ENCODE measurements at regions of chr1 and their contacts with region 1.

Region 1: DNA sequence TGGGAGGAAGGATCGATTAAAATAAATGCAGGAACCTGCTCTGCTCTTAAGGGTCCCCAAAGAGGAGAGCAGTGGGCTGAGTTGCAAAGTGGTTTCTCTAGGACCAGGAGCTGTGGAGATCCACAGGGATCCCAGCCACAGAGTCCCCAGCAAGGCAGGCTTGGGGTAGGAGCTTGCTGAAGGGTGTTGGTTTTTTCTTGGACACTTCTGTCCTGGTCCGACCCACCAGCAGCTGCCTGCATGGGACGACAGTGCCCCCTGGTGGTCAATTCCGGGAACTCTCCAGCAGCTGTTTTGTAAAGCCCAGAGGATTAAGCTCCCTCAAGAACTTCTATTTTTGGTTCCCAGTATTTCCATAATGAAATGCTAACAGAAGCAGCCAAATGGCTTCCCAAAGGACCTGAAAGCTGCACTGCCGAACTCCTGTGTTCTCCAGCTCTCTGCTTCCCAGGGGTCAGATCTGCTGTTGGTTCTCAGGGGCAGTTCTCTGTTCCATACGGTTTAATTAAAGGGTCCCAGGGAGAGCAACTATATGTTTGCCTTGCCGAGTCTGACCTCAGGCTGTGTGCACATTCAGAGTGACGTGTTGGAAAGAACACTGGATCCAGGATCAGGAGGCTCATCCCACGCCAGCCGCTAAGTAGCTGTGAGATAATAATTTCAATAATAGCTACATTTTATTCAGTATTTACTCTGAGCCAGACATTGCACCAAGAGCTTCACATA is 23.2 kb downstream of the NENF start:
- DNase-seq: peak; percentile 87
- ATAC-seq: peak; percentile 79
- H3K4me3 Mint-ChIP-seq: no peak overlapping the region
- H3K27ac Mint-ChIP-seq: no peak overlapping the region
- H3K4me1 Mint-ChIP-seq: peaks cover 7% of the 10 kb centered on the region
- H3K27me3 Mint-ChIP-seq: no peaks in the 10 kb centered on the region

Region 2: DNA sequence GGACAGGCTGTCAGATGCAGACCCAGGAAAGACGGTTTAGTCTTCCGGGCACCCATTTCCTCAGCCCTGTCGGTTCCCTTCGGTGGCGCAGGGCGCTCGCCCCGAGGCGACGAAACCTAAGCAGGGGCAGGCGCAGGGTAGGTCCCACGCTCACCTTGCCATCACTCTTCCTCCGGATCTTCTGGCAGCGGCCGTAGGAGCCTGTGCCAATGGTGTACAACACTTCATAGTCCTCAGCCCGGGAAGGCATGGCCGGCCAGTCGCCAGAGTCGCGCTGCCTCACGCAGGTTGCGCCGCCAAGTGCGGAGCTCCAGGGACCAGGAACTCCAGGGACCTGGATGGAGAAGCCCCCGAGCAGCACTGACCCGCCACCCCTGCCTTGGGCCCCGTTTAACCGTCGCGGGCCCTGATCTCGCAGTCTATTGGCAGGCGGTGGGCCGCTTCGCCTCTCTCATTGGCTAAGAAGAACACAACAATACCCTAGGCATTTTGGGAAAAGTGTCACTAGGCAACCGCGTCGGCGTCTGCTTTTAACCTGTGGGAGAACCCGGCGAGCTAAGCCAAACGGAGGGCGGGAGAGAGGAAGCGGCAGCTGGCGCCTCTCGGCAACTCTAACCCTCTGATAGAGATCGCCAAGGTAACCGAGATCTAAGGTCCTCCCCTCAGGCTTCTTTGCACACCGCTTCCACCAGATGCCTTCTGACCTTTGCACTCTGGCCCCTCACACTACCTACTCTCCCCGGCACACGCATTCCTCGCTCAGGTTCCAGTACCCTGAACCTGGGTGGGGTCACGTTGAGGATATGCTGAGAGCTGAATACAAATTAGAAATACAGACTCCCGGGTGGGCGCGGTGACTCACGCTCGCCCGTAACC is 780.5 kb before region 1 on chr1 and contains the start of gene NEK2:
- CTCF ChIA-PET with region 1: interaction called, 61 read pairs
- DNase-seq: peak; percentile 96
- ATAC-seq: peak; percentile 96
- H3K4me3 Mint-ChIP-seq: peak within 1 kb of the TSS; percentile 97
- H3K27ac Mint-ChIP-seq: peak within 1 kb of the TSS; percentile 87
- H3K4me1 Mint-ChIP-seq: peaks cover 25% of the 10 kb centered on the region
- H3K27me3 Mint-ChIP-seq: peaks cover 3% of the 10 kb centered on the region
- total RNA-seq, gene NEK2: 42.5 to 48.4 TPM

Region 3: DNA sequence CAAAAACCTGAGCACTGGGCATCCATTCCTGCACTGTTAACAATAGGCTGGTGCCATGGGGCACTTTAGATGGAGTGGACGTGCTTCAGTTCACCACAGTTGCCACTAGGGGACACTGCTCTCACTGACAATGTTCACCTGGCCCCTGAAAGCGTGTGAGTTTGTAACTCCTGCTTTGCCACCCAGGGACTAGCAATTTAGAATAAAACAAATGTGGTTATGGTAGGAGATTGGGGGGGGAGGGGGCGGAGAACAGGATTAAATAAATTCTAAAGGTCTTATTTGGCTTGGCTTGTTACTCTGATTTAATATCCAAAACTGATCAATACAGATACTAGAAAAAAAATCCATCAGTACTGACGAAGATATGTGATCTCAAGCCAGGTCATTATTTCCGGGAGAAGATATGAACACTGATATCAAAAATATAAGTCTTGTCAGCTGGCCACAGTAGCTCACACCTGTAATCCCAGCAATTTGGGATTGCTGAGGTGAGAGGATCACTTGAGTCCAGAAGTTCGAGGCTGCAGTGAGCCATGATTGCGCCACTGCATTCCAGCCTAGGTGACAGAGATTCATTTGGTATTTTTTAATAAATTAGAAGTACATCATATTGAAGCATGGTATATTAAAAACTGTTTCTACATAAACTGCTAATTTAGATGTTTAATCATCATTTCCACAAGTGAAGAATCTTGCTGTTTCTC is 443.8 kb before region 1 on chr1:
- CTCF ChIA-PET with region 1: interaction called, 11 read pairs
- DNase-seq: peak; percentile 81
- ATAC-seq: peak; percentile 98
- H3K4me3 Mint-ChIP-seq: no peak overlapping the region
- H3K27ac Mint-ChIP-seq: no peak overlapping the region
- H3K4me1 Mint-ChIP-seq: peaks cover 2% of the 10 kb centered on the region
- H3K27me3 Mint-ChIP-seq: no peaks in the 10 kb centered on the region

Region 4: GRCh38 chr1:212070720-212071302 is 385.2 kb before region 1 on chr1:
- CTCF ChIA-PET with region 1: interaction called, 71 read pairs
- DNase-seq: no peak
- ATAC-seq: peak; percentile 47
- H3K4me3 Mint-ChIP-seq: no peak overlapping the region
- H3K27ac Mint-ChIP-seq: no peak overlapping the region
- H3K4me1 Mint-ChIP-seq: peaks cover 3% of the 10 kb centered on the region
- H3K27me3 Mint-ChIP-seq: no peaks in the 10 kb centered on the region

Region 5: GRCh38 chr1:212196355-212196754 is 259.6 kb before region 1 on chr1:
- CTCF ChIA-PET with region 1: no interaction called
- DNase-seq: no peak
- ATAC-seq: no peak
- H3K4me3 Mint-ChIP-seq: no peak overlapping the region
- H3K27ac Mint-ChIP-seq: no peak overlapping the region
- H3K4me1 Mint-ChIP-seq: no peaks in the 10 kb centered on the region
- H3K27me3 Mint-ChIP-seq: no peaks in the 10 kb centered on the region

Region 6: GRCh38 chr1:212375986-212376385 is 80.0 kb before region 1 on chr1:
- CTCF ChIA-PET with region 1: interaction called, 14 read pairs
- DNase-seq: no peak
- ATAC-seq: no peak
- H3K4me3 Mint-ChIP-seq: no peak overlapping the region
- H3K27ac Mint-ChIP-seq: no peak overlapping the region
- H3K4me1 Mint-ChIP-seq: peaks cover 8% of the 10 kb centered on the region
- H3K27me3 Mint-ChIP-seq: no peaks in the 10 kb centered on the region

Region 7: DNA sequence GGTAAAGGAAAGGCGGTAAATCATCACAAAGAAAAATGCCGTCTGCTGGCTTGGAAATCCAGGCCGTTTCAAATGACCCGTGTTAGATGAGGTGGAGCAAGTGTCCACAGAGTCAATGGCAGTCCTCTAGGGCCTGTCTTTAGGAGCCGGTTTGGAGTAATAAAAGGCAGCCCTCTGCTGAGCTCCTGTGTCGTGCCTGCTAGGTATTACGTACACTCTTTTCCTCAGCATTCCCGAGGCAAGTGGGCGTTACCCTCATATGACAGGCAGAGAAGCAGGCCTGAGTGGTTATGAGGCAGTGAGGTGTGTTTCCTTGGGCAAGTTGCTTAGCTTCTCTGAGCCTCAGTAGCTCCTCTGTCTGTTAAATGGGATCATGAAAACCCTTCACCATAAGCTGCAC is 15.5 kb before region 1 on chr1:
- CTCF ChIA-PET with region 1: interaction called, 34 read pairs
- DNase-seq: no peak
- ATAC-seq: no peak
- H3K4me3 Mint-ChIP-seq: no peak overlapping the region
- H3K27ac Mint-ChIP-seq: no peak overlapping the region
- H3K4me1 Mint-ChIP-seq: no peaks in the 10 kb centered on the region
- H3K27me3 Mint-ChIP-seq: no peaks in the 10 kb centered on the region

Region 8: DNA sequence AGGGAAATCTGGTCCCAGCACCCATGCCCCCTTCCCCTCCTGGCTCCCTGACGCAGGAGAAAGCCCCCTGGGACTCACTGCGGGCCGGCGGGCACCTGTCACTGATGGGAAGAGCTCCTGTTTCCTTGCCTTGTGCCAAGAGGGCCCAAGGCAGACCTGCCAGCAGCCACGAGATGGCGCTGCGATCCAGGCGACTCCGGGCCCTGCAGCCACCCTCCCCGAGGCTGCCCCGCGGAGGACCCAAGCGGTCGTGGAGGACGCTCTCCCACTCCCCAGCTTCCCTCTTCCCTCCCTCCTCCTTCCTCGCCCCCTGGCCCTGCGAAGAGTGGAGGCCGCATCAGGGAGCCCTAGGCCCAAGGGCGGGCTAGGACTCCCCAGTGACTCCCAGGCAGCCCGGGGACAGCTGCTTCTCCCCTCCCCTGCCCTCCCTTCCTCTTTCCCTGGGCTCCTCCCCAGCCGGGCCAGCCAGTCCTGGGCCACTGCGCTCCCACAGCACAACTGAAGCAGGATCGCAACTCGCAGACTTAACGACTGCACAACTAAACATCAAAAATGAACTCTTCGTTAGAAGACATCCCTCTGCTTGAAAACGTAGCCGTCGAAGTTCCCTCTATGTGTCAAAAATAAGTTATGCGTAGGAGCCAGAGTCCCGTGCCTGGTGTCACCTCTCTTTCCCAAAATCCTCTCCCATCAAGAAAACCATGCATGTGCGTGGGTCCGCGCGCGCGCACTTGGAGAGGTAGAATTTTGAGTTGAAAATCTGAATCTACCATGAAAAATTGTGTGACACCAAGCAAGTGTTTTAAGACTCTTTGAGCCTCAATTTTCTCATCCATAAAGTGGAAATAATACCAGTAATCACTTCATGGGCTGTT is 209.5 kb after region 1 on chr1:
- CTCF ChIA-PET with region 1: interaction called, 25 read pairs
- DNase-seq: peak; percentile 87
- ATAC-seq: peak; percentile 98
- H3K4me3 Mint-ChIP-seq: peak overlapping the region; percentile 71
- H3K27ac Mint-ChIP-seq: peak overlapping the region; percentile 78
- H3K4me1 Mint-ChIP-seq: peaks cover 43% of the 10 kb centered on the region
- H3K27me3 Mint-ChIP-seq: peaks cover 15% of the 10 kb centered on the region